ENCODE measurements at regions of chr7 and their contacts with region 1.

Region 1: DNA sequence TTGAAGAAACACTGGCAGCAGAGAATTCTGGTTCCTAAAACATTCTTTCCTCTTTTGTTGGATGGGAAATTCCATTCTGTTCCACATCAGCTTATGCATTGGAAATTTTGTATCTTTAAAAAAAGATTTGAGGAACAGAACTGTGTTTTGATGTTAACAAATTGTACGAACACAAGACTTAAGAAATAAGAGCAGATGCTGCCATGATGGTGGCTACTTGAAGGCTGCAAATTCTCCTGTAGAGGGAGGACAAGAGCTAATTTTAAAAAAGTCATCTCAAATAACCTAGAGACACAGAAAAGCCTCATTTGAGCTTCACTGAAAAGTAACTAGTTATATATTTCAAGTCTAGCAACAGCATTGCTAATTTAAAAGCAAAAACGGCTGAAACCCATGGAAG is 29.8 kb downstream of the NDUFB2 start:
- DNase-seq: no peak
- CTCF ChIP-seq: peak; percentile 31

Region 2: GRCh38 chr7:140714331-140715040 is 11.8 kb before region 1 on chr7:
- CTCF ChIA-PET with region 1: interaction called, 11 read pairs
- POLR2A ChIA-PET with region 1: no interaction called
- DNase-seq: no peak
- CTCF ChIP-seq: no peak

Region 3: GRCh38 chr7:140738280-140738679 is 12.0 kb after region 1 on chr7:
- CTCF ChIA-PET with region 1: no interaction called
- POLR2A ChIA-PET with region 1: no interaction called
- DNase-seq: no peak
- CTCF ChIP-seq: no peak

Region 4: DNA sequence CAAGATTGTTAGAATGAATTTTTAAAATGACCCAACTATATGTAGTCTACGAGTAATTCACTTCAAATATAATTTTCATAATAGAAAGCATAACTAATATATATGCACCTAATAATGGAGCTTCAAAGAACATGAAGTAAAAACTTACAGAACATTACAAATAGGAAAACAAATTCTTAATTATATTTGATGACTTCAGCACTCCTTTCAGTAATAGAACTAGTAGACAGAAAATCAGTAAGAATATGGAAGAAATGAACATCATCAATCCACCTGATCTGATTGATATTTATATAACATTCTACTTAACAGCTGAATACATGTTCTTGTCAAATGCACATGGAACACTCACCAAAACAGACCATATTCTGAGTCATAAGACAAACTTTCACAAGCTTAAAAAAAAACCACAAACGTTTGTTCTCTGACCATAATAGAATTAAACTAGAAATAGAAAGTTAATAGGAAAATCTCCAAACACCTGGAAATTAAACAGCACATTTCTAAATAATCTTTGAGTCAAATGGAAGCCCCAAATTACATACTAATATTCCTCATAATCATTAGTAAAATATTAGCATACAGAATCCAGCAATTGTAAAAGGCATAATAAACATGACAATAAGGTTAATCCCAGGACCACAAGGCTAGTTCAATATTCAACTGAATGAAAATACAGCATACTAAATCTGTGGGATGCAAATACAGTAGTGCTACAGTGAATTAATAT is 150.4 kb after region 1 on chr7:
- CTCF ChIA-PET with region 1: no interaction called
- POLR2A ChIA-PET with region 1: no interaction called
- DNase-seq: peak; percentile 28
- CTCF ChIP-seq: no peak